AG04450 (cell line): ENCODE measurements at regions of chr1 and their contacts with region 1.

Region 1: DNA sequence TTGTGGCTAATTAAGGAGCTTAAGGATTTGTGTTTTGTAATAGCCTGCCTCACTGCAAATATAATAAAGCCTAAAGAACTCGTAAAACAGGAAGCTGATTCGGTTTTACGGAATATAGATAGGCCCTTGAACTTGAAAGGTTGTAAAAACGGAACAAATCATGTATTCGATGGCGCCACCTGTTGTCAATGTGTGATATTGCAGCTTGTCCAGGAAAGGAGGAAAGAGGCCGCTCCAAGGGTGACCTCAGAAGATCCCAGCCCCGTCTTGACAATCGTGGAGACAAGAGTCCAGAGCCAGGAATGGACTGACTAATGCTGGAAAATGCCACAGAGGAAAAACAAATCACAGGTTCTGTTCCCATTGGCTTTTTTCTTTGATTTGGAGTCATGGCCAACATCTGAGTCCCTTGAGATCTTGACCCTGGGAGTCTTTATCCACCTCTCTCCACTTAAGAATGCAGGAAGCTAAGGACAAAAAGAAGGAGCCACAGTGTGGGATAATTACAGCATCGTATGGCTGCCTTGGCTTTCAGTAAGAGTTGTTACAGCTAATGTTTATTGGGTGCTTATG is 7.0 kb upstream of the IGSF21 start:
- DNase-seq: peak; percentile 18
- H3K4me3 ChIP-seq: no peak overlapping the region
- H3K27ac ChIP-seq: no peak overlapping the region
- H3K27me3 ChIP-seq: peaks cover 5% of the 10 kb centered on the region
- CTCF ChIP-seq: peak; percentile 80

Region 2: DNA sequence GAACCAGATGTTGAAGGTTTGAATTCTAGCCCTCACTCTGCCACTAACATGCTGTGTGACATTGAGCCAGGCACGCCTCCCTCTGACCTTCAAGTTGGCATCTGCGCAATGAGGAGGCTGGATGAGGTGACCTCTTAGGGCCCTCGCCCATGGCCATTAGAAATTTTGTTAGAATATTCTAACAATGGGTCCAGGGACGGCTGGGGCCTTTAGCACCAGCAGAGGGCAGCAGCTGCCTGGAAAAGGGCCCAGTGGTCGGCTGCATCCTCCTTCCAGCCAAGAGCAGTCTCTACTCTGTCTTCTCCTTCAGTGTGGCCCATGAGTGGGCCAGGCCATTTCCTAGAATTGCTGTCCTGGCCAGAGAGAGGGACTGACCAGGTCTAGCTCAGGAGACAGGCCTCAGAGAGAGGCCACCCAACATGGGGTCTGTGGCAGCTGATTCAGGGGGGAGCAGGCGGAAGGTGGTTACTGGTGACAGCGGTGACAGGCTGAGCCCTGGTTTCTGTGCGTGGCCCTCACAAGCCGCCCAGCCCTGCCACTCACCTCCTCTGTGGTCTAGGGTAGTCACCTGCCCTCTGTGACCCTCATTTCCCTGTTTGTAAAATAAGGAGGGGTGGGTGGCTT is 446.7 kb before region 1 on chr1:
- CTCF ChIA-PET with region 1: interaction called, 10 read pairs
- POLR2A ChIA-PET with region 1: no interaction called
- DNase-seq: peak; percentile 18
- H3K4me3 ChIP-seq: no peak overlapping the region
- H3K27ac ChIP-seq: no peak overlapping the region
- H3K27me3 ChIP-seq: no peaks in the 10 kb centered on the region
- CTCF ChIP-seq: peak; percentile 89

Region 3: DNA sequence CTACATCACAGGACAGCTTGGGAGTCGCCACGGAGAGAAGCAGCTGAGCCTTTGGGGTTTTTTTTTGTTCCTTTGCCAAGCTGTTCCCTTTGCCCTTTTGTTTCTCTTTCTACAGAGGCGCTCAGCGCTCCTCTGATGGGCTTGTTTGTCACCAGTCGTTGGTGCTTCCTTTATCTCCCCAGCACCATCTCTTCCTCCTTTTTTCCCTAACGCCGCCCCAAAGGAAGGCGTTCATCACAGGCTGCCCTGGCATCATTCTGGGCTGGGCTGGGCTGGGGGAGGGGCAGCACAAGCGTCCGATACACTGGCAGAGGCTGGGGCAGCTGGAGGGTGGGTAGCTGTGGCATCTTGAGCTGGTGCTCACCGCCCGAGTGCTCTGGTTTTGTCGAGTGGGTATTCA is 17.5 kb after region 1 on chr1:
- CTCF ChIA-PET with region 1: interaction called, 10 read pairs
- POLR2A ChIA-PET with region 1: no interaction called
- DNase-seq: no peak
- H3K4me3 ChIP-seq: no peak overlapping the region
- H3K27ac ChIP-seq: no peak overlapping the region
- H3K27me3 ChIP-seq: no peaks in the 10 kb centered on the region
- CTCF ChIP-seq: no peak

Region 4: GRCh38 chr1:18144916-18145647 is 44.5 kb after region 1 on chr1:
- CTCF ChIA-PET with region 1: no interaction called
- POLR2A ChIA-PET with region 1: no interaction called
- DNase-seq: no peak
- H3K4me3 ChIP-seq: no peak overlapping the region
- H3K27ac ChIP-seq: no peak overlapping the region
- H3K27me3 ChIP-seq: no peaks in the 10 kb centered on the region
- CTCF ChIP-seq: no peak